ENCODE measurements at regions of chr9 and their contacts with region 1.

Region 1: GRCh38 chr9:122883125-122883524 is 22.0 kb downstream of the RC3H2 start:
- DNase-seq: no peak
- H3K4me3 ChIP-seq: no peak overlapping the region
- H3K27ac ChIP-seq: no peak overlapping the region
- H3K4me1 ChIP-seq: no peaks in the 10 kb centered on the region
- H3K27me3 ChIP-seq: no peaks in the 10 kb centered on the region
- CTCF ChIP-seq: no peak
- POLR2A ChIP-seq: no peak

Region 2: DNA sequence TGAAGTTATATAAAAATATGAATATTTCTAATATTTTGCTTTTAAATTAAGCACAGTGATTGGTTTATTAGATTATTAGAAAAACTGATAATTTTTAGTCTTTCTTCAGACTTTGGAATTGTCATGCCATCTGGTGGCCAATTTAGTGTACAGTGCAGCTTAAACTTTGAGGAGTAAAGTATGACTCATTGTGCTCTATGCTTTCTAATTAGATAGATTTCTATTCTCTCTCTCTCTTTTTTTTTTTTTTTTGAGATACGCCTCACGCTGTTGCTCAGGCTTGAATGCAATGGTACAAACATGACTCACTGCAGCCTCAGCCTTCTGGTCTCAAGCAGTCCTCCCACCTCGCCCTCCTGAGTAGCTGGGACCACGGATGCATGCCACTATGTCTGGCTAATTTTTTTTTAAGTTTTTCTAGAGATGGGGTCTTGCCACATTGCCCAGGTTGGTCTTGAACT is 108.3 kb after region 1 on chr9:
- intact Hi-C with region 1: loop called (anchors 10 kb)
- DNase-seq: no peak
- H3K4me3 ChIP-seq: no peak overlapping the region
- H3K27ac ChIP-seq: peak overlapping the region in 3 of 4 donors; percentile 13 to 67 (median 55)
- H3K4me1 ChIP-seq: peaks cover 0 to 5% (median 0%) of the 10 kb centered on the region in 3 donors
- H3K27me3 ChIP-seq: no peaks in the 10 kb centered on the region
- CTCF ChIP-seq: peak; percentile 58 to 91 (median 78)
- POLR2A ChIP-seq: no peak